ENCODE measurements at regions of chr4 and their contacts with region 1.

Region 1: DNA sequence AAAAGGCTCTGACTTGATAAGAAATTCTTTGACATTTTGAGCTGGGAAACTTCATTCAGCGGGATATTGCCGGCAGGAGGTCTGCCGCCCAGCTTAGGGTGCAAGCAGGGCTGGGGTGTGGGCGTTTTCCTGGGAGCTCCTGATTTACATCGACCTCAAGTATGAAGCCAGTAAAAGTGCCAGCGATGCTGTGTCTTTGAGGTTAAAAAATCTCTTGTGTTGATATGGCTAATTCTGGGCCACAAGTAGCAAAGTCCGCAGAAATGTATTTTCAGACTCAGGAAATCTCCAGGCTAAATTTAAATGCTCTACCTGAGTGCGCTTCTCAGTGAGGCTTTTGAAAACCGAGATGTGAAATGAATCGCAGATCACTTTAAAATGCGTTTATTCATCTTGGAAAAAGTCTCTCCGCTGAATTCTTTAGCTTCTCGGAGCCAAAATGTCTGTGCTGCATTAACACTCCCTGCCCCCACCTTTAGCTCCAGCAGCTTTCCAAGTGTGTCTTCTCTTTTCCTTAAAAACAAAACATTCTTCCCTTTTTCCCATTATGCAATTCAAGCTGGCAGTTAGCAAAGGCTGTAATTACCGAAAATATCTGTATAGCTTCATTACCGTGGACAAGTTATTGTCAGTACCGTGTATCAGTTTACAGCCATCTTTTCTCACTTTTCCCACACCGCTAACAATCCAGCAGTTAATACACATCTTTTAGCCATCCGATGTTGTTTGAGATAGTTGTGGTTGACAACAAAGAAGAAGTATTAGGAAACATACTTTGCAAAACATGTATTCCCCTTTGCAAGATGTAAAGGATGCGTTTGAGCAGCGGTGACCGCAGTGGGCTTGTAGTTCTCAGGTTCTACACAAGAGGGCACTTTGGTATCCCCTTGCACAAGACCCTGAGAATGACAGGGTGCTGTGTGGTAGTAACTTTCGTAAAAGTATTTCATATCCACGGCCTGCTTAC is 136.0 kb upstream of the STX18 start:
- DNase-seq: peak; percentile 83
- H3K4me3 ChIP-seq: peak overlapping the region; percentile 68
- H3K27ac ChIP-seq: peak overlapping the region; percentile 51
- H3K4me1 ChIP-seq: peaks cover 21% of the 10 kb centered on the region
- H3K27me3 ChIP-seq: no peaks in the 10 kb centered on the region

Region 2: DNA sequence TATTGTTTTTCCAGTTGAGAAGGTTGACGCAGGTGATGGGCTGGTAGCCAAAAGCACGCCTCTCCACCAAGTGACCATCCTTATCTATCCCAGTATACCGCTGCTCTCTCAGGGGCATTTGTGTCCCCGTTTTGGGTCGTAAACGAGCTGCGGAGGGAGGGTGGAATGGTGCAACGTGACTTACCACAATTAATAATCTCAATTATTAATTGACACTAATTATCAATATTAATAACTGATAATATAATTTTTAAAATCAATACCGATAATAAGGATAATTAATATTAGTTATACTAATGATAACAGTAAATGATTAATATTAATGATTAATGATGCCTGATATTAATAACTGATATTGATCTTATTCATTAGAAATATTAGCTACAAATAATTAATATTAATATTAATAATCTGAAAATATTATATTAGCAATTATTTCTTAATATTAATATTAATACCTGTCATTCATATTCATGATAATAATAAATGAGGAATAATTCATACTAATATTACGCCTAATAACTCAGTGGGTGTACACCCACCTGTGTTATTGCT is 507.2 kb before region 1 on chr4:
- in situ Hi-C with region 1: no loop called
- DNase-seq: no peak
- H3K4me3 ChIP-seq: no peak overlapping the region
- H3K27ac ChIP-seq: no peak overlapping the region
- H3K4me1 ChIP-seq: no peaks in the 10 kb centered on the region
- H3K27me3 ChIP-seq: no peaks in the 10 kb centered on the region; the same call in 1 of the 2 replicates

Region 3: DNA sequence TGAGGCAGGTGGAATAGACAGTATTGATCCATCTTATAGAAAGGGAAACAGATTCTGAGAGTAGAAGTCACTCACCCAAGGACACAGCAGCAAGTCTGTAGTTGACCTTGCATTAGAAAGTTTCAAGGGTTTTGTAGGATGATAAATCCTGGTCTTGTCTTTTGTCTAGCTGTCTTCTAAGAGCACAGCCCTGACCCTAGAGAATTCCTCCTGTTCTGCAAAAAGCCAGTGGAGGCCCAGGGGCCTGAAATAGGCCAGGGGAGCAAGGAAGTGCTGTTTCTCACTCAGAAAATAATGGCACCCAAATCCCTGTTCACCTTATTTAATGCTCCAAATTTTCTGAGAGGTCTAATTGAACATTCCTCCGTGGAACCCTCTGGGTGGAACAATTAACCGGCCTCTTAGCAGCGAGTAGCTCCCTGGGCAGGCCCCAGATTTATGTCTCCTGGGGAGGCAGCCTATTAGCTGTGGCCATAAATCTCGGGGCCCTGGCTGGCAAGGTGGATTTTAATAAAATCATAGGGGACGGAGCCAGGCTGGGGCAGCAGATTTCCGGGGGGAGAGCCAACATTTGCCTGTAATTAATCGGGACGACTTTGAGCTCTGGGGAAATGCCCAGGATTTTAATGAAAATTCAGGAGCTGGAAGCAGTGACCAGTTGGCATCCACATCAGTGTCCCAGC is 132.4 kb after region 1 on chr4:
- in situ Hi-C with region 1: no loop called
- DNase-seq: no peak
- H3K4me3 ChIP-seq: no peak overlapping the region
- H3K27ac ChIP-seq: no peak overlapping the region
- H3K4me1 ChIP-seq: no peaks in the 10 kb centered on the region
- H3K27me3 ChIP-seq: peaks cover 19% of the 10 kb centered on the region

Region 4: GRCh38 chr4:5037553-5038551 is 360.0 kb after region 1 on chr4:
- in situ Hi-C with region 1: no loop called
- DNase-seq: peak; percentile 92
- H3K4me3 ChIP-seq: peak overlapping the region; percentile 4; the same call in 1 of the 2 replicates
- H3K27ac ChIP-seq: peak overlapping the region; percentile 55
- H3K4me1 ChIP-seq: peaks cover 37% of the 10 kb centered on the region
- H3K27me3 ChIP-seq: peaks cover 7% of the 10 kb centered on the region; the same call in 1 of the 2 replicates

Region 5: DNA sequence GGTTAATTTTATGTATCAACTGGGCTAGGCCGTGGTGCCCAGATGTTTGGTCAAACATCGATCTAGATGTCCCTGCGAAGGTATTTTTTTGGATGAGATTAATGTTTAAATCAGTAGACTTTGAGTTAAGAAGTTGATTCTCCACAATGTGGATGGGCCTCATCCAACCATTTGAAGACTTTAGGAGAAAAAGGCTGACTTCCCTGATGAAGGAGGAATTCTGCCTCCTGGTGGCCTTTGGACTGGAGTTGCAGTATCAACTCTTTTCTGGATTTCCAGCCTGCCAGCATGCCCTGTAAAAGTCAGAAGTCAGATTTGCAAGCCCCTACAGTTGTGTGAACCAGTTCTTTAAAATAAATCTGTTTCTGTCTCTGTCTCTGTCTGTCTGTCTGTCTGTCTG is 464.9 kb after region 1 on chr4:
- in situ Hi-C with region 1: loop called (anchors 25 kb)
- DNase-seq: peak; percentile 75
- H3K4me3 ChIP-seq: no peak overlapping the region
- H3K27ac ChIP-seq: no peak overlapping the region
- H3K4me1 ChIP-seq: no peaks in the 10 kb centered on the region
- H3K27me3 ChIP-seq: 0 out of 2 replicates have a peak, but pooled peaks cover under 1% of the 10 kb centered on the region